PC-9 (cell line): ENCODE measurements at regions of chr1 and their contacts with region 1.

Region 1: GRCh38 chr1:199551967-199552565 is 475.4 kb upstream of the NR5A2 start:
- DNase-seq: peak; percentile 36 to 37
- H3K4me3 ChIP-seq: no peak overlapping the region
- H3K27ac ChIP-seq: no peak overlapping the region
- H3K4me1 ChIP-seq: no peaks in the 10 kb centered on the region
- H3K27me3 ChIP-seq: no peaks in the 10 kb centered on the region
- CTCF ChIP-seq: peak; percentile 87

Region 2: DNA sequence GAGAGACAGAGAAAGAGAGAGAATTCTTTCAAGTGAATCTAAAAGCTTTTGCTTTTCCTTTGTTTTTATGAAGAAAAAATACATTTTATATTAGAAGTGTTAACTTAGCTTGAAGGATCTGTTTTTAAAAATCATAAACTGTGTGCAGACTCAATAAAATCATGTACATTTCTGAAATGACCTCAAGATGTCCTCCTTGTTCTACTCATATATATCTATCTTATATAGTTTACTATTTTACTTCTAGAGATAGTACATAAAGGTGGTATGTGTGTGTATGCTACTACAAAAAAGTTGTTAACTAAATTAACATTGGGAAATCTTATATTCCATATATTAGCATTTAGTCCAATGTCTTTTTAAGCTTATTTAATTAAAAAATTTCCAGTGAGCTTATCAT is 795.6 kb before region 1 on chr1:
- CTCF ChIA-PET with region 1: no interaction called
- POLR2A ChIA-PET with region 1: no interaction called
- intact Hi-C with region 1: loop called (anchors 2 kb)
- DNase-seq: no peak
- H3K4me3 ChIP-seq: no peak overlapping the region
- H3K27ac ChIP-seq: no peak overlapping the region
- H3K4me1 ChIP-seq: no peaks in the 10 kb centered on the region
- H3K27me3 ChIP-seq: no peaks in the 10 kb centered on the region
- CTCF ChIP-seq: peak; percentile 62

Region 3: GRCh38 chr1:199612976-199613774 is 61.1 kb after region 1 on chr1:
- CTCF ChIA-PET with region 1: interaction called, 13 read pairs
- POLR2A ChIA-PET with region 1: no interaction called
- intact Hi-C with region 1: no loop called
- DNase-seq: peak; percentile 51 to 93
- H3K4me3 ChIP-seq: peak overlapping the region; percentile 18; the same call in 1 of the 2 replicates
- H3K27ac ChIP-seq: peak overlapping the region; percentile 72
- H3K4me1 ChIP-seq: peaks cover 23% of the 10 kb centered on the region
- H3K27me3 ChIP-seq: no peaks in the 10 kb centered on the region
- CTCF ChIP-seq: no peak